ENCODE measurements at regions of chr17 and their contacts with region 1.

Region 1: DNA sequence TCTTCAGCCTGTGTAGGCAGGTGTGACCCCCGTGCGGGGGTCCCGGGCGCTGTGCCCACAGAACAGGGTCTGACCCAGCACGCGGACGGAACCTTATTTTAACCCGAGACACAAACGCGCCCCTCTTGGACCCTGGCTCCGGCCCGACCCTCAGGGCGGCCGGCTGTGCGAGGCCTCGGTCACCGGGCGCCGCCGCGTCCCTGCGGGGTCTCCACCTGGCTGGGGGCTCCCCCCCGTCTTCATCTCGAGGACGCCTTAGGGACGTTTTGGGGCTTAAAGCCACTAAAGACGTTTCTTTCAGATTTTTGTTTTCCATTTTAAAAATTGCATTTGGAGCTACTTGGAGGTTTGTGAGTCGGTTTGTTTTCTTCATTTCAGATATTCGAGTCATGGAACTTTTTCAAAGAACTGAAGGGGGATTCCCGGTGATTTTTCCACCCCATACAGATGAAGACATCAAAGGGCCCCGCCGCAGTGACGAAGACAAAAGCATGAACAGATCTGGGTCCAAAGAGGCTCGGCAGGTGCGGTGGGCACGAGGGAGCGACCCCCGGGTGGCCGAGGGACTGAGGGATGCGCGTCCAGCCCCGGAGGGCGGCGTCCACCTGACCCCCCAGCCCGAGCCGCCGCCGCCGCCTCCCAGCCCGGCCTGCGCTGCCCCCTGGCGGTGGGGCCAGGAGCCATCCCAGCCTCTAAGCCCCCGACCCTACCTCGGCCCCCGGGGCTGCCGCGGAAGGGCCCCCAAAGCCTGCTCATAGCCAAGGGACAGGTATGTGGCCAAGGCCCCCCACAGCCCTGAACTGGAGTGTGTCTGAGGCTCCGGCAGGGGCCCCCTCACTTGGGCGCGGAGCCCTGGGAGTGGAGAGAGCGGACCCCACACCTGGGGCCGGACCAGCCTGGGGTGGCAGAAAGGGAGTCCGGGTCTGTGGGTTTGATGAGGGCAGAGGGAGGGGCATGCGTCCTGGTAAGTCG is 3.8 kb upstream of the CD7 start:
- DNase-seq: no peak
- H3K4me3 ChIP-seq: peak overlapping the region; percentile 32
- H3K27ac ChIP-seq: no peak overlapping the region
- H3K4me1 ChIP-seq: peaks cover 11% of the 10 kb centered on the region
- H3K27me3 ChIP-seq: peaks cover 27% of the 10 kb centered on the region
- CTCF ChIP-seq: peak; percentile 91

Region 2: DNA sequence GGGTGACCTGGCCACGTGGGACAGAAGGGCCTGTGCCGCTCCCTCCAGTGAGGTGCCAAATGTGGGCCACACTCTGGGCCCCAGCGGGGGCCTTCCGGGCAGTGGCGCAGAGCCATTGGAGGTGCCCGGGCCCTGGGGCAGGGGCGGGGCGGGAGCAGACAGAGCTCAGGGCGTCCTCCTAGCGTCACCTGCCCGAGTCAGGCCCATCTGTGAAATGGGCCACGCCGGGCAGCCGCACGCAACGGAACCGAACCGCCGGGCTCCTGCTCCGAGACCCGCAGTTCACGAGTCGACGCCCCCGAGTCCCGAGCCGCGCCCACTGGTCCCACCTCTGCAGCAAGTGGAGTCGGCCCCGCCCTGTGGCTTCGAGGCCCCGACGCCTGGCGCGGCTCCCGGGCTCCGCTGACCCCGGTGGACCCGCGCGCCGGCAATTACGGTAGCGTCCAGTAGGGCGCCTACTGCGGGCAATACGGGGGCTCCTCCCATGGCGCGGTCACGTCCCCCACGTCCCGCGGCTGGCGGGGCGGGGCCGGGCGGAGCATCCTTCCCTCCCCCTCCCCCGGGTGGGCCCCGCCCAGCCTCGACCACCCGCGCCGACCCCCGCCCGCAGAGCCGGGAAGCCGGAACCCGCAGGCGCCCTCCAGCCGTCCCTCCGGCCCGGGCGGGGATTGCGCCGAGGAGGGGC is 90.5 kb before region 1 on chr17:
- intact Hi-C with region 1: loop called (anchors 10 kb)
- DNase-seq: peak; percentile 92
- H3K4me3 ChIP-seq: peak overlapping the region; percentile 73
- H3K27ac ChIP-seq: peak overlapping the region; percentile 98
- H3K4me1 ChIP-seq: peaks cover 75% of the 10 kb centered on the region
- H3K27me3 ChIP-seq: peaks cover 13% of the 10 kb centered on the region
- CTCF ChIP-seq: peak; percentile 80

Measured in left ventricle myocardium inferior (tissue), 1 donor.